ENCODE measurements at regions of chr18 and their contacts with region 1.

Region 1: DNA sequence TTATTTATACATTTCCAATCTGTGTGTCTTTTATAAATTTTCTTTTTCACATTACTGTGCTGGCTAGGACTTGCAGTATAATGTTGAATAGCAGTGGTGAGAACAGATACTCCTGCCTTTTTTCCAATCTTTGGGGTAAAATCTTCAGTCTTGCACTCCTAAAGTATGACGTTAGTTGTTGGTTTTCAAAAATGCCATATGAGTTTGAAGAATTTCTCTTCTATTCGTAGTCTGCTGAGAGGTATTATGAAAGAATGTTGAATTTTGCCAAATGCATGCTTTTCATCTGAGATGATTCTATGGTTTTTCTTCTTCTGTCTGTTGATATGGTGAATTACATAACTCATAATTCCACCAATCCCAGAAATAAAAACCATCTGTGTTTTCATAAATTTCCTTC is 335.3 kb upstream of the CHST9 start:
- DNase-seq: no peak
- ATAC-seq: no peak
- H3K4me3 Mint-ChIP-seq: no peak overlapping the region
- H3K27ac Mint-ChIP-seq: no peak overlapping the region
- H3K4me1 Mint-ChIP-seq: no peaks in the 10 kb centered on the region
- H3K27me3 Mint-ChIP-seq: no peaks in the 10 kb centered on the region

Region 2: GRCh38 chr18:27213123-27213717 is 307.2 kb before region 1 on chr18:
- CTCF ChIA-PET with region 1: no interaction called
- POLR2A ChIA-PET with region 1: no interaction called
- intact Hi-C with region 1: no loop called
- DNase-seq: no peak
- ATAC-seq: no peak
- H3K4me3 Mint-ChIP-seq: no peak overlapping the region
- H3K27ac Mint-ChIP-seq: no peak overlapping the region
- H3K4me1 Mint-ChIP-seq: no peaks in the 10 kb centered on the region
- H3K27me3 Mint-ChIP-seq: no peaks in the 10 kb centered on the region

Region 3: DNA sequence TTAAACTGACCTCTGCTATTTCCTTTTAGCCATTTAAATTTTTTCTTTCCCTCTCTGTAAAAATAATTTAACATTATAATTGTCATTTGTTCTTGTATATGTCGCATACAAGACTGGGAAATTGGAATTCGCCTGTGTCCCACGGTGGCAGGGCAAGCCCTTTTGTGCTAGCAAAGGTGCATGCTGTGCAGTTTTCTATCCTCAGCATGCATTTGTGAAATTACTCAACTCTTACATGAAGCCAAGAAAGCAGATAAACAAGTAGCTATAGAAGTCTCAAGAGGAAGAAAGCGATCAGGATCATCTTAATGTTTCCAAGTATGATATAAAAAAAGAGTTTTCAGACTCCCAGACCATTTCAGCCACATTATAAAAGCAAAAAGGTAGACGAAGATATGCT is 57.4 kb after region 1 on chr18:
- CTCF ChIA-PET with region 1: no interaction called
- POLR2A ChIA-PET with region 1: no interaction called
- intact Hi-C with region 1: loop called in 1 of 2 experiments (anchors 5 kb)
- DNase-seq: no peak
- ATAC-seq: no peak
- H3K4me3 Mint-ChIP-seq: no peak overlapping the region
- H3K27ac Mint-ChIP-seq: no peak overlapping the region
- H3K4me1 Mint-ChIP-seq: no peaks in the 10 kb centered on the region
- H3K27me3 Mint-ChIP-seq: no peaks in the 10 kb centered on the region

Measured in activated CD4-positive, alpha-beta T cell treated with anti-CD3 and anti-CD28 coated beads for 36 hours (primary cell).